ENCODE measurements at regions of chr1 and their contacts with region 1.

Region 1: GRCh38 chr1:230310381-230311163 is 115.6 kb downstream of the PGBD5 start:
- DNase-seq: peak in 5 of 6 donors; percentile 57 to 88 (median 77)
- ATAC-seq: peak; percentile 73 to 94 (median 88)
- H3K4me3 ChIP-seq: no peak overlapping the region
- H3K27ac ChIP-seq: no peak overlapping the region
- H3K4me1 ChIP-seq: no peaks in the 10 kb centered on the region
- H3K27me3 ChIP-seq: no peaks in the 10 kb centered on the region
- CTCF ChIP-seq: peak; percentile 78 to 88 (median 85)

Region 2: GRCh38 chr1:229661022-229661877 is 649.3 kb before region 1 on chr1:
- intact Hi-C with region 1: loop called (anchors 5 to 10 kb)
- DNase-seq: peak; percentile 73 to 92 (median 86)
- ATAC-seq: peak; percentile 97 to 100 (median 99)
- H3K4me3 ChIP-seq: no peak overlapping the region
- H3K27ac ChIP-seq: no peak overlapping the region
- H3K4me1 ChIP-seq: no peaks in the 10 kb centered on the region
- H3K27me3 ChIP-seq: no peaks in the 10 kb centered on the region
- CTCF ChIP-seq: peak; percentile 77 to 88 (median 82)

Region 3: DNA sequence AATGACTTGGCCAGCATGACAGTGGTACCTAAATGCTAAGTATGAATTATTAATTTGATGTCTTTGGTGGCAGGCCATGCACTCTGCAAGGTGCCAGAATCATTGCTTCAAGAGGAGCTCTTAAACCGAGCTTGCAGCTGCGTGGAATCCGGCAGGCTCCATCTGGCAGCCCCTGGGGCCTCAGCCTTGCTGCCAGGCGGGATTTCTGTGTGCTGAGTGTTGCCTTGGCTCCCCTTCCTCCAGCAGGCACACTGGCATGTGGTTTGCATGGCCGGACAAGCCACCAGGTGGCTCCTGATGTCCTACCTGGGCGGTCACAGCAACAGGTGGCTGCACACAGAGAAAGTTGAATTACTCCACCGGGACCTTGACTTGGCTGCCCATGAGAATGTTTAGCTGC is 529.1 kb before region 1 on chr1:
- intact Hi-C with region 1: loop called in 1 of 3 experiments (anchors 10 kb)
- DNase-seq: peak; percentile 73 to 93 (median 80)
- ATAC-seq: peak; percentile 94 to 99 (median 98)
- H3K4me3 ChIP-seq: no peak overlapping the region
- H3K27ac ChIP-seq: no peak overlapping the region
- H3K4me1 ChIP-seq: peaks cover 0 to 5% (median 0%) of the 10 kb centered on the region in 3 donors
- H3K27me3 ChIP-seq: no peaks in the 10 kb centered on the region
- CTCF ChIP-seq: peak in 3 of 4 donors; percentile 42 to 63 (median 57)

Region 4: GRCh38 chr1:230441183-230442029 is 130.8 kb after region 1 on chr1:
- intact Hi-C with region 1: no loop called
- DNase-seq: no peak
- ATAC-seq: no peak
- H3K4me3 ChIP-seq: no peak overlapping the region
- H3K27ac ChIP-seq: no peak overlapping the region
- H3K4me1 ChIP-seq: no peaks in the 10 kb centered on the region
- H3K27me3 ChIP-seq: no peaks in the 10 kb centered on the region
- CTCF ChIP-seq: no peak

Measured in pancreas (tissue), 10 donors.